CD4-positive, alpha-beta memory T cell (primary cell): ENCODE measurements at regions of chr18 and their contacts with region 1.

Region 1: GRCh38 chr18:45664824-45665763 is 49.8 kb downstream of the SLC14A2 start:
- DNase-seq: peak; percentile 61 to 71 (median 66)
- H3K4me3 ChIP-seq: no peak overlapping the region
- H3K4me3 Mint-ChIP-seq: peak overlapping the region in 7 of 8 donors; percentile 21 to 80 (median 61)
- H3K27ac ChIP-seq: no peak overlapping the region
- H3K27ac Mint-ChIP-seq: peak overlapping the region; percentile 47 to 91 (median 88)
- H3K4me1 ChIP-seq: peaks cover 56% of the 10 kb centered on the region
- H3K4me1 Mint-ChIP-seq: peaks cover 42 to 63% (median 52%) of the 10 kb centered on the region in 4 donors
- H3K27me3 ChIP-seq: no peaks in the 10 kb centered on the region
- H3K27me3 Mint-ChIP-seq: no peaks in the 10 kb centered on the region

Region 2: GRCh38 chr18:45090526-45091140 is 574.5 kb before region 1 on chr18:
- CTCF ChIA-PET with region 1: no interaction called
- POLR2A ChIA-PET with region 1: no interaction called
- intact Hi-C with region 1: no loop called
- DNase-seq: no peak
- H3K4me3 ChIP-seq: no peak overlapping the region
- H3K4me3 Mint-ChIP-seq: no peak overlapping the region
- H3K27ac ChIP-seq: no peak overlapping the region
- H3K27ac Mint-ChIP-seq: no peak overlapping the region
- H3K4me1 ChIP-seq: no peaks in the 10 kb centered on the region
- H3K4me1 Mint-ChIP-seq: no peaks in the 10 kb centered on the region
- H3K27me3 ChIP-seq: no peaks in the 10 kb centered on the region
- H3K27me3 Mint-ChIP-seq: peaks cover 1 to 5% of the 10 kb centered on the region in 2 donors

Region 3: DNA sequence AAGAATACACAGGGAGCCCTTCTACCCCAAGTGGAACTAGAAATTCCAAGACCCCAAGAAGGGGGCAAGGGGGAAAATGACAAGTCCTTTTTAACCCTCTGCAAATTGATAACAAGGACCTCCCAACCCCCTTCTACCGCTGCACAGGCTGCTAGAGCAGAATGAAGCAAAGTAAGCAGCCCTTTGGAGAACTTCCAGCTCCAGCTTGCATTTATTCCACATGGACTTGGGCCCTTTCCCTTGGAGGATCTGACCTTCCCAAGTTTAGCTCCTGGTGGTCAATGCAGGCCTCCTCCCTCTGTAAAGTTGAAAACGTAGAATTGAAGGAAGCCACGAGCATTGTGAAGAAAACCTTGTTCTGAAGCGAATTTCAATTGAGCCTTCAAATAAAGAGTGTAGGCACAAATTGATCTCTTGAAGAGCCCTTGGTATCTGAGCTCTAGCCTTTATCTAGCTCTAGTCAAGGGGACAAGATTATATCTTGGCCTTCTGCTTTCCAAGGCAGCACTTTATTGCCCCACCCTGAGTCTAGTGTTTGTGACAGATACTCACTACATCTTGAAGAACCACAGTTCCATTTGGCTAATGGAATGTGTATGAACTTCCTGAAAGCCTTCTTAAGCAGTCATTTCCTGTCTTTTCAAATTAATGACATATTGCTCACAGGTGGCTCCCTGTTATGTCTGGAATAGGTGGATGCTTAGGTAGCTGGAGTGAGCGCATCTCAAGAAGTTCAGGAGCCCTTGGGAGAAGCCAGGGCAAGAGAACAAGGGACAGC is 12.6 kb before region 1 on chr18:
- CTCF ChIA-PET with region 1: interaction called, 18 read pairs
- POLR2A ChIA-PET with region 1: no interaction called
- intact Hi-C with region 1: no loop called
- DNase-seq: no peak
- H3K4me3 ChIP-seq: no peak overlapping the region
- H3K4me3 Mint-ChIP-seq: no peak overlapping the region
- H3K27ac ChIP-seq: no peak overlapping the region
- H3K27ac Mint-ChIP-seq: peak overlapping the region in 1 of 7 donors; percentile 64
- H3K4me1 ChIP-seq: peaks cover 20% of the 10 kb centered on the region
- H3K4me1 Mint-ChIP-seq: peaks cover 13 to 37% (median 27%) of the 10 kb centered on the region in 4 donors
- H3K27me3 ChIP-seq: no peaks in the 10 kb centered on the region
- H3K27me3 Mint-ChIP-seq: peaks cover 0 to 3% of the 10 kb centered on the region in 2 donors

Region 4: DNA sequence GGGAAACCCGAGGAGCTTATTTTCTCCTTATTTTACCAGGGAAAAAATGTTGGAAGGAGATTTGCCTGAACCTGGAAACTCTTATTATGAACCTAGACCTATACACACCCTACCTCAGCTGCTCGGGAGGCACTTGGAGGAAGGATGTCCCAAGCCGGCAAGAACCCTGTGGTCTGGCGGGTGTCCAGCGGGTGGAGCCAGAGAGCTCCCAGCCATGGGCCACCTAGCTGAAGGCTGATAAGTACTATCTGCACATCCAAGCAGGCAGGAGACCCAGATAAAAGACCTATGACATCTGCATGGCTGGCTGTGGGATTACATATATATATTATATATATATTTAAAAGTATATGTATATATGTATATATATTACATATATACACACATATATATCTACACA is 57.8 kb after region 1 on chr18:
- CTCF ChIA-PET with region 1: interaction called, 36 read pairs
- POLR2A ChIA-PET with region 1: interaction called, 7 read pairs
- intact Hi-C with region 1: loop called (anchors 1 kb)
- DNase-seq: peak; percentile 45 to 57 (median 53)
- H3K4me3 ChIP-seq: no peak overlapping the region
- H3K4me3 Mint-ChIP-seq: no peak overlapping the region
- H3K27ac ChIP-seq: no peak overlapping the region
- H3K27ac Mint-ChIP-seq: no peak overlapping the region
- H3K4me1 ChIP-seq: no peaks in the 10 kb centered on the region
- H3K4me1 Mint-ChIP-seq: peaks cover 0 to 8% (median 0%) of the 10 kb centered on the region in 4 donors
- H3K27me3 ChIP-seq: no peaks in the 10 kb centered on the region
- H3K27me3 Mint-ChIP-seq: no peaks in the 10 kb centered on the region

Region 5: GRCh38 chr18:45820106-45820745 is 155.1 kb after region 1 on chr18:
- CTCF ChIA-PET with region 1: no interaction called
- POLR2A ChIA-PET with region 1: no interaction called
- intact Hi-C with region 1: no loop called
- DNase-seq: no peak
- H3K4me3 ChIP-seq: no peak overlapping the region
- H3K4me3 Mint-ChIP-seq: no peak overlapping the region
- H3K27ac ChIP-seq: no peak overlapping the region
- H3K27ac Mint-ChIP-seq: no peak overlapping the region
- H3K4me1 ChIP-seq: peaks cover 2% of the 10 kb centered on the region
- H3K4me1 Mint-ChIP-seq: peaks cover 4 to 8% (median 7%) of the 10 kb centered on the region in 4 donors
- H3K27me3 ChIP-seq: no peaks in the 10 kb centered on the region
- H3K27me3 Mint-ChIP-seq: peaks cover 5 to 10% of the 10 kb centered on the region in 2 donors

Region 6: DNA sequence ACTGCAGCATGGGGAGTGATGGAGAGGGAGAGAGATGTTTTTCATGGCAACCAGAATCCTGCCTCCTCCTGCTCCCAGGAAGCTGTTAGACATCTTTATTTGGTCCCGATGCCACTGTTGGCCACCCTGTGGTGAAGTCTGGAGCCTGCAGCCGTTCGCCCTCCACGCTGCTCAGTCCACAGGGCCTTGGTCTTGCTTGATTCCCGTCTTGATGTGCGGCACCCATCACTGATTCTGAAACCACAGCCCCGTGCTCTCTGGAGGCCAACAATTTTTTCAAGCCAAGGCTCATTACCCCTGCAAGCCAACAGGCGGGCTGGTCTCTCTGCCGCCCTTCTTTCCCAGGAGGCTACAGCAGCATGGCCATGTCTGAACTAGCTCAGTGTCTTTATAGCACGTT is 184.9 kb after region 1 on chr18:
- CTCF ChIA-PET with region 1: interaction called, 11 read pairs
- POLR2A ChIA-PET with region 1: no interaction called
- intact Hi-C with region 1: no loop called
- DNase-seq: no peak
- H3K4me3 ChIP-seq: no peak overlapping the region
- H3K4me3 Mint-ChIP-seq: no peak overlapping the region
- H3K27ac ChIP-seq: no peak overlapping the region
- H3K27ac Mint-ChIP-seq: peak overlapping the region in 3 of 7 donors; percentile 24 to 59 (median 54)
- H3K4me1 ChIP-seq: no peaks in the 10 kb centered on the region
- H3K4me1 Mint-ChIP-seq: peaks cover 0 to 2% (median 0%) of the 10 kb centered on the region in 4 donors
- H3K27me3 ChIP-seq: no peaks in the 10 kb centered on the region
- H3K27me3 Mint-ChIP-seq: no peaks in the 10 kb centered on the region

Region 7: DNA sequence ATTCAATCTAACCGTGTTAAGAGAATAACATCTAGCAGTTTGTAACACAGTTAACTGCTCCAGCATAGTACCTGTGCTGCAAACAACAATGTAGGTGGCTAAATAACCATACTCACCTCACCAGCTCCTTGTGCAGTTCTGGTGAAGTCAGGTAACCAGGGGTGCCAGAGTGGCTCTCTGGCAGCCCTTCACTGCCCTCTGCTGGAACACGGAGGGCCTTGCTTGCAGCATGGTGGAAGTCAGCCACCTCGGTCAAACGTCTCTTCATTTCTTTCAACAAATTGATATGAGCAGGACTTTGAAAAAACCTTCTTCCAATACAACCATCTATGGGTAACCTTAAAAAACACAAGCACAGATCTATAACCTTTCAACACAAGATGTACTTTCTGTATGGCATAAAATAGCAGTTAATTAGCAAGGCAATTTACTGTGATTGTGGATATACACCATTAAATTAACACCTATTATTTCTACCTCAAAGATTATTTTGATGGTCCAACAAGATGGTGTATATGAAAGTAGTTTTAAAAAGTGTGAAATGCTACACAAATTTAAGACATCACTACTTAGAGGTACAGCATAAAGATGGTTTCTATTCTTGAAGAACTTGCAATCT is 245.4 kb after region 1 on chr18:
- CTCF ChIA-PET with region 1: interaction called, 118 read pairs
- POLR2A ChIA-PET with region 1: interaction called, 3 read pairs
- intact Hi-C with region 1: loop called (anchors 1 kb)
- DNase-seq: peak; percentile 45 to 61 (median 57)
- H3K4me3 ChIP-seq: no peak overlapping the region
- H3K4me3 Mint-ChIP-seq: no peak overlapping the region
- H3K27ac ChIP-seq: no peak overlapping the region
- H3K27ac Mint-ChIP-seq: peak overlapping the region in 2 of 7 donors; percentile 12 to 70
- H3K4me1 ChIP-seq: no peaks in the 10 kb centered on the region
- H3K4me1 Mint-ChIP-seq: peaks cover 0 to 6% (median 4%) of the 10 kb centered on the region in 4 donors
- H3K27me3 ChIP-seq: no peaks in the 10 kb centered on the region
- H3K27me3 Mint-ChIP-seq: no peaks in the 10 kb centered on the region